Lower leg skin (tissue), 4 donors: ENCODE measurements at regions of chr14 and their contacts with region 1.

Region 1: GRCh38 chr14:88870777-88871176 is 46.3 kb downstream of the TTC8 start:
- DNase-seq: no peak
- H3K4me3 ChIP-seq: no peak overlapping the region
- CTCF ChIP-seq: no peak
- POLR2A ChIP-seq: no peak

Region 2: GRCh38 chr14:88667555-88668273 is 203.1 kb before region 1 on chr14:
- intact Hi-C with region 1: loop called (anchors 5 kb)
- DNase-seq: peak in 1 of 2 donors; percentile 20
- H3K4me3 ChIP-seq: no peak overlapping the region
- CTCF ChIP-seq: no peak
- POLR2A ChIP-seq: no peak